ENCODE measurements at regions of chr9 and their contacts with region 1.

Region 1: DNA sequence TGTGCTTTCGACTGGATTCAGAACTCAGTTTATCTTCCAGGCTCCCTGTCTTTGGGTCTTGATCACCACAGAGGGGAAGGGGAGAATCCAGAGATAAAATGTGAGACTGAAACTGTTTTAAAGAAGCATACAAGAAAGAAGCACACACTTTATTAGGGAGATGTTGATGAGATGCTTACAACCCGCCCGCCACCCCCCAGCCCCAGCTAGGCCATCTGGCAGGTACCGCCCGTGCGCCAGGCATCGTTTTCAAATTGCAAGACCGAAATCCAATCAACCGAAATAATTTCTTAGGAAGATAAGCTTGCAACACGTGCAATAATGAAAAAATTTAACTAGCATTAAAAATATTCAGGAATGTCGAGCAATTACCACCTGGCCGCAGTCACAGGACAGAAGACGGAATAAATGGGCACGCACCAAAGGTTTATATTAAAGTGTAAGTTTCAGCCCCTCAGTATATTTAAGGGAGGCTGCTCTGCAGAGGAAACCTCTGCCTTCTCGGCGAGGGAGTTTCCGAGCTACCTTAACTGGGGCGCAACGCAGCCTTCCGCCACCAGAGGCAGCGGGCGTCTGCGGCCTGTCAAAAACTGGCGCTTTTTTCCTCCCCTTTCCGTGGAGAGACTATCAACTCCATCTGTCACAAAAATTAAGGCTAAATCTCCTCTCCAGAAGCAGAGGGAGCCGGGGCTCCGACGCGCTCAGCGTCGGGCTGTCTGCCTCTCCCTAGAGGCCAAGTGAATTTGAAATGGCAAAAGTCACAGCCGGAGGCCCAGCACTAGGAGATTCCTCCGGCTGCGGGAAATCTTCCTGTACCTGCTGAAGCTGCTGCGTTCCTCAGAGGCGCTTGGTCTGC is 996 bp upstream of the GAS1 start:
- DNase-seq: peak; percentile 66 to 78 (median 73)
- H3K4me3 ChIP-seq: peak overlapping the region; percentile 57 to 60
- H3K4me3 Mint-ChIP-seq: peak overlapping the region; percentile 89 to 94 (median 91)
- H3K27ac ChIP-seq: no peak overlapping the region
- H3K27ac Mint-ChIP-seq: peak overlapping the region; percentile 44 to 88 (median 76)
- H3K4me1 ChIP-seq: peaks cover 14% of the 10 kb centered on the region
- H3K4me1 Mint-ChIP-seq: peaks cover 10 to 21% (median 11%) of the 10 kb centered on the region in 4 donors
- H3K27me3 ChIP-seq: peaks cover 17% of the 10 kb centered on the region
- H3K27me3 Mint-ChIP-seq: peaks cover 10 to 11% of the 10 kb centered on the region in 2 donors

Region 2: GRCh38 chr9:86282077-86282978 is 666.0 kb before region 1 on chr9 and contains the start of gene ISCA1:
- CTCF ChIA-PET with region 1: no interaction called
- POLR2A ChIA-PET with region 1: interaction called, 11 read pairs
- intact Hi-C with region 1: loop called (anchors 2 kb)
- DNase-seq: peak; percentile 97 to 100 (median 97)
- H3K4me3 ChIP-seq: peak within 1 kb of the TSS; percentile 93 to 94
- H3K4me3 Mint-ChIP-seq: peak within 1 kb of the TSS; percentile 87 to 98 (median 96)
- H3K27ac ChIP-seq: peak within 1 kb of the TSS; percentile 96
- H3K27ac Mint-ChIP-seq: peak within 1 kb of the TSS; percentile 91 to 100 (median 99)
- H3K4me1 ChIP-seq: peaks cover 45% of the 10 kb centered on the region
- H3K4me1 Mint-ChIP-seq: peaks cover 31 to 48% (median 39%) of the 10 kb centered on the region in 4 donors
- H3K27me3 ChIP-seq: no peaks in the 10 kb centered on the region
- H3K27me3 Mint-ChIP-seq: no peaks in the 10 kb centered on the region
- total RNA-seq, gene ISCA1: 34.6 to 37.2 TPM

Region 3: DNA sequence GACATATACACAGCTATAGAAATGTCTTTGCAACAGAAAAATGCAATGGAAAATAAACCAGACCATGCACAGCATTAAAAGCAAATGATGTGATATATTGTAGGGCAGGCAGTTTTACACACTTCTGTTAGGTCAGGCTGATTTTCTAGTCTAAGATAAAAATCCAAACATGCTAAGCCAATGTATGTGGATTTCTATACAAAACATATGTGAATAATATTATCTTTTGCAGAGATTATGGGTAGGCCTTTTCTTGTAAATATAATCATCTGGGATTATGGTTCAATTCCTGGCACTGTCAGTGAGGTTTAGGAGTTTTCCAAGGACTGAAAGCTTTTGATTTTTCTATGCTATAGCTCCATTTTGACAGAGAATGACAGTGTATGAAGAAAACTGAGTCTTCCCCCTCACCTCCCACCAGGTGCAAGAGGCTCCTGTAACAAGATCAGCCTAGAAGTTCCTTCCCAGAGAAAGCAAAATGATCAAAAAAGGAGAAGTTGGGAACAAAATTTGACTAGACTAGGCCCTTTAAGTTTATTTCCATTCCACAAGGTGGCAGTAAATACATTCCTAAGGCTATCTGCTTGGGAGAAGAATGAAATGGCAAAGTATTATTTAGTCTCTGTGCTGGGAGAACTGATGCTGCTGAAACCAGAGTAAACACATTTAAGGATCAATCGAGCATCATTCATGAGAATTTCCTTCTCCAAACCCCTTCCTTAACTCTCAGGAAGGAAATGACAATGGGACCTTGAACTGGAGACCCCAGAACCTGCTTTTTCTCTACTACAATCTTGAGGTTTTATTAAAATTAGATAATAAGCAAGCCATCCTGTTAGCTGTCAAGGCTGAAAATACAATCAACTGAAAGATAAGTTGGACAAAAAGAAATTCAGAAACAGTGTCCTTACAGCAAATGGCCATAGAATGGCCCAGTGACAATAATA is 461.1 kb before region 1 on chr9:
- CTCF ChIA-PET with region 1: no interaction called
- POLR2A ChIA-PET with region 1: no interaction called
- intact Hi-C with region 1: loop called (anchors 5 kb)
- DNase-seq: peak in 1 of 5 donors; percentile 4
- H3K4me3 ChIP-seq: no peak overlapping the region
- H3K4me3 Mint-ChIP-seq: no peak overlapping the region
- H3K27ac ChIP-seq: no peak overlapping the region
- H3K27ac Mint-ChIP-seq: no peak overlapping the region
- H3K4me1 ChIP-seq: no peaks in the 10 kb centered on the region
- H3K4me1 Mint-ChIP-seq: peaks cover 0 to 5% (median 2%) of the 10 kb centered on the region in 4 donors
- H3K27me3 ChIP-seq: no peaks in the 10 kb centered on the region
- H3K27me3 Mint-ChIP-seq: peaks cover 2 to 3% of the 10 kb centered on the region in 2 donors

Region 4: DNA sequence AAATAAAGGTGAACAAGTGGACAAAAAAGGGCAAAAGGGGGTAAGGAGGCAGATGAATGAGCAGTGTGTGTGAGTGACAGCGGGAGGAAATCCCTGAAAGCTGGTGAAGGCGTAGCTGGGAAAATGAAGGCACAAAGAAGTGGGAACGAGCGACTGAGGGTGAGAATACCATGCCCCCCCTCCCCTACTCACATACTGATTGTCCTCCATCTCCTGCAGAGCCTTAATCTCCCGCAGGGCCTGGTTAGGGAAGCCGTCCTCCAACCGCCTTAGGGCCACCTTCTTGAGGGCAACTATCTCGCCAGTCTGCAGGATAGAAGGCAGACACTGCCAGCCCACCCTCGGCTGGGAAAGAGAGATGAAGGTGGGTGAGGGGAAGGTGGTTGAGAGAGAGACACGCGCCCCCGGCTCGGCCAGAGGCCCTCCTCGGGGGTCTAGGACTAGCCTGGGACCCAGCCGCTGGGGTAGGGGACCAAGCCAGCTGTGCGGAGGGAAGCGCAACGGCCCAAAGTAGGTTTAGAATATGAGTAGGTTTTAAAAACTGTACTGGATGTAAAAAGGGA is 1025.5 kb after region 1 on chr9:
- CTCF ChIA-PET with region 1: no interaction called
- POLR2A ChIA-PET with region 1: interaction called, 3 read pairs
- intact Hi-C with region 1: loop called (anchors 5 kb)
- DNase-seq: peak in 1 of 5 donors; percentile 24
- H3K4me3 ChIP-seq: peak overlapping the region; percentile 14 to 96
- H3K4me3 Mint-ChIP-seq: peak overlapping the region; percentile 92 to 99 (median 96)
- H3K27ac ChIP-seq: peak overlapping the region; percentile 87
- H3K27ac Mint-ChIP-seq: peak overlapping the region; percentile 95 to 100 (median 99)
- H3K4me1 ChIP-seq: peaks cover 17% of the 10 kb centered on the region
- H3K4me1 Mint-ChIP-seq: peaks cover 16 to 35% (median 29%) of the 10 kb centered on the region in 4 donors
- H3K27me3 ChIP-seq: no peaks in the 10 kb centered on the region
- H3K27me3 Mint-ChIP-seq: peaks cover 0 to 2% of the 10 kb centered on the region in 2 donors